ENCODE measurements at regions of chr19 and their contacts with region 1.

Region 1: DNA sequence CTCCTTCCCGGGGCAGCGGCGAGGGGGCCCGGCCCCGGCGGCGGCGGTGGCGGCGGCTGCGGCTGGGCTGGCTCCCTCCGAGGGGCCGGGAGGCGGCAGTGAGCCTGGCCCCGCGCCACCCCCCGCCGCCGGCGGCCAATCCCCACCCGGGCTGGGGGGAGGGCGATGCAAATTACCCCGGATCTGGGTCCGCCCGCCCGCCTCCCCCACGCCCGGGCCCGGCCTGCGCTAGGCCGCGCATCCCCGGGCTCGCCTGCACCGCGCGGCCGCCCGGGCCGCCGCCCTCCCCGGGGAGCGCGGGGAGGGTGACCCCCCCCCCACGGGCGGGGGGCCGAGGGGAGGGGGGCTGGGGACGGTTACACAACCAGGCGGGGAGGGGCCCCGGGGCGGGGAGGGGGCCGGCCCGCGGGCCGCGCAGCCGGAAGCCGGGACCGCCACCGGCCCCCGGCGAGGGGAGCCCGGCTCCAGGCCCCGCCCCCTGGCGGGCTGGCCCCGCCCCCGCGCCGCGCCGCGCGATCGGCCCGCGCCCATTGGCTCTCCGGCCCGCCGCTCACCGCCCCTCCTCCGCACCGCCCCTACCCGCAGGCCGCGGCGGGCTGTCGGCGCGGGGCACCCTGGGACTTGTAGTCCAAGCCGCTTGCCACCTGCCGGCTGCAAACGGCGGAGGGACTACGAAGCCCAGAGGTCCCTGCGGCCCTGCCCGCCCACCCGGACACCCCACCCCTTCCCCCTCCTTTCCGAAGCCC is 1.1 kb downstream of the ZBTB7A start:
- DNase-seq: peak; percentile 94 to 99 (median 97)
- ATAC-seq: peak; percentile 74
- H3K4me3 ChIP-seq: peak overlapping the region; percentile 89
- H3K4me3 Mint-ChIP-seq: peak overlapping the region; percentile 88
- H3K27ac ChIP-seq: peak overlapping the region in 1 of 2 donors; percentile 83
- H3K27ac Mint-ChIP-seq: peak overlapping the region; percentile 98
- H3K4me1 ChIP-seq: peaks cover 68% of the 10 kb centered on the region
- H3K4me1 Mint-ChIP-seq: peaks cover 33% of the 10 kb centered on the region
- H3K27me3 ChIP-seq: no peaks in the 10 kb centered on the region
- H3K27me3 Mint-ChIP-seq: no peaks in the 10 kb centered on the region
- CTCF ChIP-seq: no peak

Region 2: DNA sequence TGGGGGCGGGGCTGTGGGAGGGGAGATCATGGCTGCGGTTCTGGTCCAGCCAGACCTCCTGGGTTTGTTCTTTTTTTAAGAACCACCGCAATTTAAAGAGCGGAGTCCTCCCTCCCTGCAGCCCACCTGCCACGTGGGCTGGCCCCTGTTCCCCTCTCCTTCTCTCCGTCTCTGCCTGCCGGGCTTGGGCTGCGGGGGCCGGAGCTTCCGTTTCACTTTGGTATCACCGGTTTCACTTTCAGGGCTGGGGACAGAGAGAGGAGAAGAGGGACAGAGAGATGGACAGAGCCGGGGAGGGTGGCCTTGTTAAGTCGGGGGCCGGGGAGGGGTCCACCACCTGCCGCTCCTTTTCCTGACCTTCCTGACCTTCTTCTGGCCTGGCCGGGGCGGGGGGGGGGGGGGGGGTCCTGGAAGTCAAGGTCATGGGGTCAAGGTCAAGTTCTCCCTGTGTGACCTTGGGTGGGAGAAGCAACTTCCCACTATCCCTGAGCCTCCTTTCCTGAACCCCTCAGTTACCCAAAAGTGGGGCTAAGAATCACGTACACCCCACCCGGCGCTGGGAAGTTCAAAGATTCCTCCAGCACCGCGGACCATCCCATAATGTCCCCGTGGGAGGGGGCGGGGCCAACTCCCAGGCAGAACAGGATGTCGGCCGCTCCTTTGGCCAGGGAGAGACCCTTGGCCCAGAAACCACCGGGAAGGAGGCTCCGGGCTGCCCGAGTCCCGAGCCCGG is 12.4 kb after region 1 on chr19:
- CTCF ChIA-PET with region 1: no interaction called
- POLR2A ChIA-PET with region 1: interaction called, 12 read pairs
- intact Hi-C with region 1: no loop called
- DNase-seq: peak in 8 of 14 experiments; percentile 35 to 75 (median 58)
- ATAC-seq: peak; percentile 80
- H3K4me3 ChIP-seq: peak overlapping the region; percentile 79
- H3K4me3 Mint-ChIP-seq: peak overlapping the region; percentile 88
- H3K27ac ChIP-seq: peak overlapping the region; percentile 51 to 59
- H3K27ac Mint-ChIP-seq: peak overlapping the region; percentile 83
- H3K4me1 ChIP-seq: peaks cover 52% of the 10 kb centered on the region
- H3K4me1 Mint-ChIP-seq: peaks cover 31% of the 10 kb centered on the region
- H3K27me3 ChIP-seq: no peaks in the 10 kb centered on the region
- H3K27me3 Mint-ChIP-seq: no peaks in the 10 kb centered on the region
- CTCF ChIP-seq: no peak

Region 3: DNA sequence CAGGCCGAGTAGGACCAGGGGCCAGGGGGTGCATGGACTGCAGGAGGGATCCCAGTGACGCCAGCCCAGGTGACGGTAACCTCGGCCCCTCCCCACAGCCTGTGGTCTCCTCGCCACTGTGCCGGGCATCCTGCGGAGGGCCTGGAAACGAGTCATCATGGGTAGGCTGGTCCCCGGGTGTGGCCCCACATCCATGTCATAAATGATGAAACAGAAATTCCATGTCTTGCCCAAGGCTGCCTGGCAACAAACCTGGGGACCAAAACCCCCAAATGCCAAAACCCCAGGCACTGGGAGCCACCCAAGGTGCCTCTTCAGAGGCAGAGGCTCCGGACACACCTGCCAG is 37.4 kb after region 1 on chr19:
- CTCF ChIA-PET with region 1: no interaction called
- POLR2A ChIA-PET with region 1: interaction called, 70 read pairs
- intact Hi-C with region 1: loop called (anchors 1 to 2 kb)
- DNase-seq: peak in 1 of 14 experiments; percentile 13
- ATAC-seq: no peak
- H3K4me3 ChIP-seq: no peak overlapping the region
- H3K4me3 Mint-ChIP-seq: no peak overlapping the region
- H3K27ac ChIP-seq: no peak overlapping the region
- H3K27ac Mint-ChIP-seq: no peak overlapping the region
- H3K4me1 ChIP-seq: peaks cover 53% of the 10 kb centered on the region
- H3K4me1 Mint-ChIP-seq: peaks cover 29% of the 10 kb centered on the region
- H3K27me3 ChIP-seq: no peaks in the 10 kb centered on the region
- H3K27me3 Mint-ChIP-seq: no peaks in the 10 kb centered on the region
- CTCF ChIP-seq: no peak

Region 4: GRCh38 chr19:4115050-4115817 is 49.6 kb after region 1 on chr19:
- CTCF ChIA-PET with region 1: no interaction called
- POLR2A ChIA-PET with region 1: interaction called, 10 read pairs
- intact Hi-C with region 1: loop called in 1 of 2 experiments (anchors 2 kb)
- DNase-seq: peak; percentile 45 to 89 (median 66)
- ATAC-seq: peak; percentile 100
- H3K4me3 ChIP-seq: peak overlapping the region; percentile 9
- H3K4me3 Mint-ChIP-seq: peak overlapping the region; percentile 75
- H3K27ac ChIP-seq: peak overlapping the region; percentile 55 to 58
- H3K27ac Mint-ChIP-seq: peak overlapping the region; percentile 87
- H3K4me1 ChIP-seq: peaks cover 46% of the 10 kb centered on the region
- H3K4me1 Mint-ChIP-seq: peaks cover 25% of the 10 kb centered on the region
- H3K27me3 ChIP-seq: no peaks in the 10 kb centered on the region
- H3K27me3 Mint-ChIP-seq: no peaks in the 10 kb centered on the region
- CTCF ChIP-seq: no peak

Region 5: DNA sequence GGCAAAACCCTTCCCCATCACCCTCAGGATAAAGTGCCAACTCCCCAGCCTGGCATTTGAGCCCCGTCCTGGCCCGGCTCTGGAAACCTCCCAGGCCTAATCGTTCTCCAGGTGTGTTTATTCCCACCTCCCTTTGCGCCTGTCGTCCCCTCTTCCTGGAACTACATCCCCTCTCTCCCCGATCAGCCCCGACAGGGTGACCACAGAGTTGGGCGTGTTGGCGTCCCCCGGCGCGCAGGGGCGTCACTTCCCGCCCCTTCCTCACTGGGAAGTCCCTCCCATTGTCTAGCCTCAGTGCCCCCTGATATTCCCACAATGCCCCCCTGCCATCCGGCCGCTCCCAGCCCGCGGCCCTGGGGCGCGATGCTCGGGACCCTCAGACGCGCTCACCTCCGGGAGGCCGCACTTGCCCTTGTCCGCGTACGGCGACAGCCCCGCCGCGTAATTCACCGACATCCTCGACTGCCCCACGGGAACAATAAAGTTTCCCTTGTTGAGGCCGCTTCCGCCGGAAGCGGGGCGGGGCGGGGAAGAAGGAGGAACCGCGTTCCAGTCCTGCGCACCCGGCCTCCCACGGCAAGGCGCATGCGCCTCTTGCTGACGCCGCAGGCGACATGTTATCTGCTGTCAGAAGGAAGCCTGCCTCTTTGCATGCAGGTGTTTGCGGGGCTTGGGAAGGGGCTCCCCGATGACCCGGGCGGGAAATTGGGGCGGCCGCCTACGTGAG is 116.6 kb after region 1 on chr19 and contains the starts of genes ANKRD24 and SIRT6:
- CTCF ChIA-PET with region 1: no interaction called
- POLR2A ChIA-PET with region 1: no interaction called
- intact Hi-C with region 1: loop called in 1 of 2 experiments (anchors 5 kb)
- DNase-seq: peak; percentile 90 to 98 (median 96)
- ATAC-seq: peak; percentile 80
- H3K4me3 ChIP-seq: peak within 1 kb of the TSS; percentile 96
- H3K4me3 Mint-ChIP-seq: peak within 1 kb of the TSS; percentile 99
- H3K27ac ChIP-seq: peak within 1 kb of the TSS; percentile 66 to 80
- H3K27ac Mint-ChIP-seq: peak within 1 kb of the TSS; percentile 96
- H3K4me1 ChIP-seq: peaks cover 47% of the 10 kb centered on the region
- H3K4me1 Mint-ChIP-seq: peaks cover 32% of the 10 kb centered on the region
- H3K27me3 ChIP-seq: no peaks in the 10 kb centered on the region
- H3K27me3 Mint-ChIP-seq: peaks cover 3% of the 10 kb centered on the region
- CTCF ChIP-seq: no peak
- total RNA-seq, gene ANKRD24: 0.59 to 0.60 TPM
- total RNA-seq, gene SIRT6: 11.2 to 14.2 TPM

Measured in CD4-positive, alpha-beta T cell (primary cell).